GM13976 (cell line): ENCODE measurements at regions of chr17 and their contacts with region 1.

Region 1: DNA sequence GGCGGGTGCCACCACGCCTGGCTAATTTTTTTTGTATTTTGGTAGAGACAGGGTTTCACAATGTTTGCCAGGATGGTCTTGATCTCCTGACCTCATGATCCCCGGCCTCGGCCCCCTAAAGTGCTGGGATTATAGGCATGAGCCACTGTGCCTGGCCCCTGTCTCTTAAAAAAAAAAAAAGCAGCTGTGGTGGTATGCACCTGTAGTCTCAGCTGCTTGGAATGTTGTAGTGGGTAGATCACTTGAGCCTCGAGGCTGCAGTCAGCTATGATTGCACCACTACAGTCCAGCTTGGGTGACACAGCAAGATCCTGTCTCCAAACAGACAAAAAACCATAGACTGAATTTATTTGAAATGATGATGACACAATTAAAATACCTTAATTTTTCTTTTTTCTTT is 24.3 kb downstream of the CDK12 start:
- DNase-seq: no peak
- CTCF ChIP-seq: no peak

Region 2: DNA sequence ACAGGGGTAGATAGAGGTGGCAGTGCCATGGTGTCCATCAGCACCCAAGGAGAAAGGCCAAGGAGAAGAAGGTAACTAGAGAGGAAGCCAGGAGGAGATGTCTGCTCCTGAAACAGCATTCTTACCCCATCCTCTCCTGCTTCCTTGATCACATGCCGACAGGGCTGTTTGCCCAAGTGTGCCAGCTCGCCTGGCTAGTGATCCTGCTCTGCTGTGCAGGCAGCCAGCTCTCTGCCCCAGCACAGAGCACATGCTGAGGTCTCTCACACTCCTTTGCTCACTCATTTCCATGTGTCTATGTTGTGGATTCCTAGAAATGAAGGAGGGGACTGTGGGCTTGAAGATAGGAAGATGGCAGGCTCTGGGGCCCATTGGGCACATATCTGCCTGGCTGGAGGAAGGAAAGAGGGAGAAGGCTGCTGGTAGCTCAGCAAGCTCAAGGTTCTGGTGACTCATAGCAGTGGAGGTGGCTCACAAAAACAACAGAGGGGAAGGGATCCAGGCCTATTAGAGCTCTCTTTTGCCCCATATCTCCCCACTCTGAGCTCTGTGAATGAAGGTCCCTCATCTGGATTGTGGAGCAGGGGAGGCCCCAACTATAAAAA is 67.9 kb after region 1 on chr17:
- in situ Hi-C with region 1: loop called (anchors 10 kb)
- DNase-seq: no peak
- CTCF ChIP-seq: no peak

Region 3: GRCh38 chr17:39915559-39915958 is 430.0 kb after region 1 on chr17:
- in situ Hi-C with region 1: no loop called
- DNase-seq: peak; percentile 40
- CTCF ChIP-seq: no peak